Ovary (tissue), 10 donors: ENCODE measurements at regions of chr17 and their contacts with region 1.

Region 1: DNA sequence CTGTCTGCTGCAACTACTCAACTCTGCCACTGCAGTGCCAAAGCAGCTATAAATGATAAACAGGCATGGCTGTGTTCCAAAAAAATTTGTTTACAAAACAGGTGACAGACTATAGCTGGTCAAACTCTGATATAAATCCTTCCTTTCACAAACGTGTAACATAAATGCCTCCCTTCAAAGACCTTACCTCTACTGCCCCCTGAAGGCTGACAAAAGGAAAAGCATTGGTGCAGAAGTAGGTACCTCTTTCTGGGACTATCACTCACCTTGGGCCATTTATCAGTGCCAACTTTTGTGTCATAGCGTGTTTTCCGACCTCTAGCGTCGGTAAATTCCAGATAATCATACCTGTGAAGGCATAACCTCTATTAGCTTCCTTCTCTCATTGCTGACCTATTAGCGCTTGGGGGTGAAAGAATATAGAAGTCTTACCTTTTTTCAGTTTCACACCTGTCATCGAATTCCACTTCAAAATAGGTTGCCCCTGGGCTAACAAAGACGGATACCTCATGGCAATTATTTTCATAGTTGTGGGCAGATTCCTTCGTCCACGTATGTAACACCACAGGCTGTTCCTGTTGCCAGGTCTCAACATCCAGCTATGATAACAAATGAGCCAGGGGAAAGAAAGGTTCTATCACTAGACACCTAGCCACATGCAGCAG is 67.9 kb downstream of the ZZEF1 start:
- DNase-seq: no peak
- H3K4me3 ChIP-seq: no peak overlapping the region
- H3K27ac ChIP-seq: no peak overlapping the region
- H3K4me1 ChIP-seq: no peaks in the 10 kb centered on the region
- H3K27me3 ChIP-seq: no peaks in the 10 kb centered on the region
- CTCF ChIP-seq: peak in 1 of 3 donors; percentile 38
- EP300 ChIP-seq: no peak
- POLR2A ChIP-seq: no peak

Region 2: DNA sequence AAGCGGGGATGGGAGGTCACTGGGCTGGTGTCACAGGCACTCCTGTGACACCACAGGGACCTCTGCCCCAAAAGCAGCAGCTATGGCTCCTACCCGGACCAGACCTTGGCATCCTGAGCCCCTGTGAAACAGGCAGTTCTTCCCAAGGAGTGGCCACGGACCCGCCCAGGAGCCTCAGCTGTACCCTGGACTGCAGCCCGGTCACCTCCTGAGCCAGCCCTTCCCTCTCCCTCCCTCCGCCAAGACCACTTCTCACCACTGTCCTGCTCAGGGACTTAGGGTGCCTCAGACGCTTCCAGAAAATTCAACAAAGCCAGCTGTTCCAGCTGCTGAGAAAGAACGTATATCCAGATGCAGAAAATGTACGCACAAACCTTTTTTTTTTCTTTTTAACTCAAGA is 215.0 kb before region 1 on chr17:
- intact Hi-C with region 1: loop called in 1 of 4 experiments (anchors 5 kb)
- DNase-seq: no peak
- H3K4me3 ChIP-seq: no peak overlapping the region
- H3K27ac ChIP-seq: no peak overlapping the region
- H3K4me1 ChIP-seq: no peaks in the 10 kb centered on the region
- H3K27me3 ChIP-seq: no peaks in the 10 kb centered on the region
- CTCF ChIP-seq: no peak
- EP300 ChIP-seq: no peak
- POLR2A ChIP-seq: no peak